ENCODE measurements at regions of chr1 and their contacts with region 1.

Region 1: GRCh38 chr1:26363549-26364448 is 8.8 kb downstream of the ZNF683 start:
- DNase-seq: peak; percentile 86
- H3K4me3 ChIP-seq: no peak overlapping the region; a peak in 1 of 4 replicates
- H3K27ac ChIP-seq: no peak overlapping the region
- H3K4me1 ChIP-seq: peaks cover 0 to 9% of the 10 kb centered on the region in 2 experiments; a peak in 2 of 4 replicates
- H3K27me3 ChIP-seq: peaks cover 21% of the 10 kb centered on the region; the same call in 1 of the 2 replicates
- CTCF ChIP-seq: peak; percentile 93
- EP300 ChIP-seq: no peak
- RAD21 ChIP-seq: peak; percentile 75

Region 2: GRCh38 chr1:26284597-26285360 is 79.0 kb before region 1 on chr1:
- CTCF ChIA-PET with region 1: interaction called, 43 read pairs
- POLR2A ChIA-PET with region 1: interaction called, 5 read pairs
- DNase-seq: peak; percentile 84
- H3K4me3 ChIP-seq: no peak overlapping the region; a peak in 1 of 4 replicates
- H3K27ac ChIP-seq: peak overlapping the region in 1 of 2 experiments; percentile 50; a peak in 2 of 4 replicates
- H3K4me1 ChIP-seq: peaks cover 28 to 33% of the 10 kb centered on the region in 2 experiments; a peak in 3 of 4 replicates
- H3K27me3 ChIP-seq: no peaks in the 10 kb centered on the region
- CTCF ChIP-seq: peak; percentile 75
- EP300 ChIP-seq: no peak
- RAD21 ChIP-seq: peak; percentile 66

Region 3: GRCh38 chr1:26345718-26346549 is 17.9 kb before region 1 on chr1:
- CTCF ChIA-PET with region 1: interaction called, 99 read pairs
- POLR2A ChIA-PET with region 1: no interaction called
- DNase-seq: no peak
- H3K4me3 ChIP-seq: no peak overlapping the region
- H3K27ac ChIP-seq: no peak overlapping the region
- H3K4me1 ChIP-seq: no peaks in the 10 kb centered on the region
- H3K27me3 ChIP-seq: peaks cover 13% of the 10 kb centered on the region; the same call in 1 of the 2 replicates
- CTCF ChIP-seq: no peak
- EP300 ChIP-seq: no peak
- RAD21 ChIP-seq: no peak

Region 4: DNA sequence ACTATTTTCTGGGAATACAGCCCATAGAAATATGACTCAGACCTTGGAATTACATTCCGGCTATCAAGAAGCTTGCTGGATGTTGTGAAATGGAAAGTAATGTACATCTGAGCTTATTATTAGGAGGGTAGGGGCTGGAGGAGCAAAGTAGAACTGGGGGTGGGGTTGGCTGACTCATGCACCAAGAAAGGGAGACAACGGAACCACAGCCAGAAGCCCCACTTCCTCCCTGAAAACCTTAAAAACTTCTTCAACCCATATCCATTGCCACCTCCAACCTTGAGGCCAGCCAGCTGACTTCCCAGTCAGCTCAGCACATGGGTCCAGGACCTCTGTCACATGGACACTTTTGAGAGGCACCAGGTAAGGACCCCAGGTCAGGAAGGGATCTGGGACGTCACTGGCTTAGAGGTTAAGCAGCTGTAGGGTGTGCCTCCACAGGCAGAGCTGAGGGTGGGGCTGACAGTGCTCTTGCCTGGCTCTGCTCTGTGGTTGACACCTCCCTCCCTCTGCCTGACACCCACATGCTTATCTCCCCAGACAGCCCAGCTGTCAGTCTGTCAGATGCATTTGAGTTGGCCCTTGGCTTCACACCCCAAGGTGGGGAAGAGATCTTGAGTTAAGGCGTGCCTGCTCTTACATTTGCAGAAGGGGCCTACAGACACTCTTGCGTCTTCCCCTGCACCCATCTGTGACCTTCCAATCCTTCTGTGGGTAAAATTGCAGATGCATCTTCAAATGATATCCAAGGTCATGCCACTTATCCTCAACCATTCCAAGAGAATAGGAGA is 14.5 kb after region 1 on chr1:
- CTCF ChIA-PET with region 1: interaction called, 89 read pairs
- POLR2A ChIA-PET with region 1: no interaction called
- DNase-seq: no peak
- H3K4me3 ChIP-seq: no peak overlapping the region
- H3K27ac ChIP-seq: peak overlapping the region; percentile 11 to 86; a peak in 3 of 4 replicates
- H3K4me1 ChIP-seq: peaks cover 0 to 6% of the 10 kb centered on the region in 2 experiments; a peak in 2 of 4 replicates
- H3K27me3 ChIP-seq: no peaks in the 10 kb centered on the region
- CTCF ChIP-seq: no peak
- EP300 ChIP-seq: peak in 1 of 2 experiments; percentile 29; a peak in 2 of 4 replicates
- RAD21 ChIP-seq: no peak

Region 5: GRCh38 chr1:26405281-26405915 is 41.6 kb after region 1 on chr1:
- CTCF ChIA-PET with region 1: interaction called, 13 read pairs
- POLR2A ChIA-PET with region 1: no interaction called
- DNase-seq: no peak
- H3K4me3 ChIP-seq: peak overlapping the region in 1 of 2 experiments; percentile 23; a peak in 1 of 4 replicates
- H3K27ac ChIP-seq: peak overlapping the region in 1 of 2 experiments; percentile 49; a peak in 2 of 4 replicates
- H3K4me1 ChIP-seq: peaks cover 0 to 7% of the 10 kb centered on the region in 2 experiments; a peak in 1 of 4 replicates
- H3K27me3 ChIP-seq: no peaks in the 10 kb centered on the region
- CTCF ChIP-seq: no peak
- EP300 ChIP-seq: no peak
- RAD21 ChIP-seq: no peak

Region 6: DNA sequence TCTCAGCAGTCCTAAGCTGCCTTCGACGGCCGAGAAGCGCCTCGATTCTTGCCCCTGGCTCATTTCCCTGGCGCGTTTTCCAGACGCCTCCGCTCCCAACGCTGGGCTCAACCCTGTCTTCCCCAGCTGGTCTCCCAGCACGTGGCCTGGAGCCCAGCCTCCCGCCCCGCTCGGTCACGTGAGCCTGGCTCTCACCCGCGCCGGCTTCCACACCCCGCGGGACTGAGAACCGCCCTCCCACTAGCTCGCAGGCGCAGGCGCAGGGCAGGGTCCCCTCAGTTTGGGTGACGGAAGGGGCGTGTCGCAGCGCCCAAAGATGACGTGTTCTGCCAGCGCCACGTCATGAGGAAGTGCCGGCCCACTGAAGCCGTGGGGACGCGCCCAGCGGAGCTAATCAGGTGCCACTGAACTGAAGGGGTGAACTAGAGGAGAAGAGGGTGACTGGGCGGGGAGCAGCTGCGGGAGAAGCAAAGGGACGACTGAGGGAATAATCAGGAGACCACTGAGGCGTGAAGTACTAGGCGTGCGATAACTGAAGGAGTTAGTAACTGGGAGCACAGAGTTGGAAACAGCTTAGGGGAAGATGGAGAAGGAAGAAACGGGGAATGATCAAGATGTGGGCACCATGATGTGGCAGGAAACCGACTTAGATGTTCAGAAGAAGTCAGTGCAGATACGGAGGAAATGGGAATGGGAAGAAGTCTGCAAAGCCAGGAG is 68.3 kb after region 1 on chr1 and contains the start of gene DHDDS:
- CTCF ChIA-PET with region 1: interaction called, 10 read pairs
- POLR2A ChIA-PET with region 1: no interaction called
- DNase-seq: peak; percentile 98
- H3K4me3 ChIP-seq: peak within 1 kb of the TSS; percentile 73 to 83
- H3K27ac ChIP-seq: peak within 1 kb of the TSS; percentile 59 to 79; a peak in 3 of 4 replicates
- H3K4me1 ChIP-seq: peaks cover 7 to 8% of the 10 kb centered on the region in 2 experiments; a peak in 2 of 4 replicates
- H3K27me3 ChIP-seq: no peaks in the 10 kb centered on the region
- CTCF ChIP-seq: no peak
- EP300 ChIP-seq: no peak
- RAD21 ChIP-seq: no peak
- polyA plus RNA-seq, gene DHDDS: 25.0 and 36.6 TPM in 2 replicates